H1 (cell line): ENCODE measurements at regions of chr17 and their contacts with region 1.

Region 1: DNA sequence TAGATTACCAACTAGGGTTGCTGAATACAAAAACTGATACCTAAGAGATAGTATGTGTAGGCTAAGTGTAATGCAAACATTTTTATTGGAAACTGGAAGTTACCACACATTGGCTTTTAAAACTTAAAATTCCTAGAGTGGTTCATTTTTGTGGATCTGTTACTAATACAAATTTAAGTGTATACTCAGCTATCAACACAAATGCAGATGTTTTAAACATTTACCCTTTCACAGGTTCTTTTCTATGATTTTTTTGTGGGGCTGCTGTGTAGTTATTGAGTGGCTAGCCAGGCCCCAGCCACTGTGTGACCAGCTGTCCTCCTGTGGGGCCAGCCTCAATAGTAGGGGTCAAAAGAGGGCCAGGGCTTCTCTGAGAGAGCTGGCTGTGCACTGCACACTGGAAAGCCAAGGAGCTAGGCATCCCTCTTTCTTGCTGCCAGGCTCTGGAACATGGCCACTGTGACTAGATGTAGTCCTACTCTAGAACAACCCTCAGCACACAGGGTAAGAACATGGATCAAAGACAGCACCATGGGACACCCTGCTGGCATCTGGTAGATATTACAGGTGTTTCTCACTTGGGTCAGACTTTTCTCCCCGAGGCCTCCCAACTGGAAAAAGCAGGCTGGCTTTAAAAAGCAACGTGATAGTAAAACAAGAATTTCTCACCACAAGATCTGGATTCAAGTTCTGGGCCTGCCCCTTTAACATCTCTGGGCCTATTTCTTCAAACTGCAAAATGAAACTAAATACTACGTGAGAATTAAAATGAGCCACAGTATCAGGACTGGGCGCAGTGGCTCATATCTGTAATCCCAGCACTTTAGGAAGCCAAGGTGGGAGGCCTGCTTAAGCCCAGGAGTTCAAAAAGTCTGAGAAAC is 7.3 kb upstream of the VEZF1 start:
- DNase-seq: no peak
- H3K4me3 ChIP-seq: no peak overlapping the region
- H3K27ac ChIP-seq: no peak overlapping the region
- H3K4me1 ChIP-seq: peaks cover 0 to 9% (median 0%) of the 10 kb centered on the region in 4 experiments; a peak in 1 of 7 replicates
- H3K27me3 ChIP-seq: no peaks in the 10 kb centered on the region
- CTCF ChIP-seq: peak; percentile 17 to 74 (median 67)
- EP300 ChIP-seq: no peak
- POLR2A ChIP-seq: peak; percentile 50 to 76
- RAD21 ChIP-seq: peak; percentile 79 to 84

Region 2: DNA sequence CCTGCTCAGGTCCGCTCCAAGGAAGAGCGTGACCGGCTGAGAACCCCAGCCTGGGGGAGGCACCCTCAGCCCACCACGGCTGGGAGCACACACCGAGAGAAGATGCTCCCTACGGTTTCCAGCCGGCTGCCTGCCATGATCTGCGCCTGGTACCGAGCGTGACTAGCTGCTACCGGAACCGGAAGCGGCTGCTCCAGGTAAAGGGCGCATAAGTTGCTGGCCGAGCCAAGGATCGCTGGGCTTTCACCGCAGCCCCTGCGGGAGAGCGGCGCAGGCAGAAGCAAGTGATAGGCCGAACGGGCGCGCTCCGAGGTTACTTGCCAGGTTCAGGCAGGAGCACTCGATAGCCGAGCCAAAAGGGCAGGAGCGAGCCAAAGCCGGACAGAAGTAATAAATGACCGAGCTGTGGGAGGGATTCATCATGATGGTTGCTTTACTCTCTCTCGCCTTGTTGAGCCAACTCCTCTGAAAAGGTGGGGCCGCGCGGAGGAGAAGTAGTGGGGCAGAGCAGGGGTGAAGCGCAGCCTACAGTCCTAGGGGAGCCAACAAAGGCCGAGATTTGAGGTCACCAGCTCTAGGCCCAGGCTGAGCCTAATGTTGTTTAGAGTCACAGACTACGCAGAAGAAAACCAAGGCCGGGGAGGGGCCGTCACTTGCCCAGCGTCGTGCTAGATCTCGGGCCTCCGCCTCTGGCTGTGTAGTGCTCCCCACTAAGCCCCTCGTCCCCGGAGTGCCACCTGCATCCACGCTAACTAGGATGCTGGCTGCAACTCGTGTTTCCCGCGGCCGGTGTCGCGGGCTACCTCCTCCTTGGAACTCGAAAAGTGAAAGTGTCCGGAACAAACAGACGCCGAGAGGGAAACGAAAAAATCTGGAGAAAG is 145.2 kb before region 1 on chr17 and contains the start of gene MRPS23:
- CTCF ChIA-PET with region 1: interaction called, 384 read pairs
- POLR2A ChIA-PET with region 1: interaction called, 672 read pairs
- DNase-seq: peak; percentile 90 to 96
- H3K4me3 ChIP-seq: peak within 1 kb of the TSS; percentile 89 to 98 (median 94)
- H3K27ac ChIP-seq: peak within 1 kb of the TSS; percentile 63
- H3K4me1 ChIP-seq: peaks cover 0 to 7% (median 3%) of the 10 kb centered on the region in 4 experiments; a peak in 3 of 7 replicates
- H3K27me3 ChIP-seq: no peaks in the 10 kb centered on the region
- CTCF ChIP-seq: no peak
- EP300 ChIP-seq: peak in 1 of 2 experiments; percentile 92; a peak in 1 of 3 replicates
- POLR2A ChIP-seq: peak in 1 of 2 experiments; percentile 68; a peak in 2 of 3 replicates
- RAD21 ChIP-seq: no peak
- total RNA-seq, gene MRPS23: 60.4 and 73.4 TPM in 2 replicates

Region 3: GRCh38 chr17:57892146-57892828 is 103.0 kb before region 1 on chr17:
- CTCF ChIA-PET with region 1: interaction called, 41 read pairs
- POLR2A ChIA-PET with region 1: interaction called, 7 read pairs
- DNase-seq: peak in 1 of 2 experiments; percentile 99
- H3K4me3 ChIP-seq: peak overlapping the region in 1 of 4 experiments; percentile 1; a peak in 1 of 8 replicates
- H3K27ac ChIP-seq: peak overlapping the region; percentile 54; the same call in 1 of the 2 replicates
- H3K4me1 ChIP-seq: peaks cover 8 to 11% (median 11%) of the 10 kb centered on the region in 4 experiments
- H3K27me3 ChIP-seq: no peaks in the 10 kb centered on the region
- CTCF ChIP-seq: peak; percentile 96 to 100 (median 100)
- EP300 ChIP-seq: peak in 1 of 2 experiments; percentile 71; a peak in 1 of 3 replicates
- POLR2A ChIP-seq: no peak
- RAD21 ChIP-seq: peak; percentile 89 to 94

Region 4: DNA sequence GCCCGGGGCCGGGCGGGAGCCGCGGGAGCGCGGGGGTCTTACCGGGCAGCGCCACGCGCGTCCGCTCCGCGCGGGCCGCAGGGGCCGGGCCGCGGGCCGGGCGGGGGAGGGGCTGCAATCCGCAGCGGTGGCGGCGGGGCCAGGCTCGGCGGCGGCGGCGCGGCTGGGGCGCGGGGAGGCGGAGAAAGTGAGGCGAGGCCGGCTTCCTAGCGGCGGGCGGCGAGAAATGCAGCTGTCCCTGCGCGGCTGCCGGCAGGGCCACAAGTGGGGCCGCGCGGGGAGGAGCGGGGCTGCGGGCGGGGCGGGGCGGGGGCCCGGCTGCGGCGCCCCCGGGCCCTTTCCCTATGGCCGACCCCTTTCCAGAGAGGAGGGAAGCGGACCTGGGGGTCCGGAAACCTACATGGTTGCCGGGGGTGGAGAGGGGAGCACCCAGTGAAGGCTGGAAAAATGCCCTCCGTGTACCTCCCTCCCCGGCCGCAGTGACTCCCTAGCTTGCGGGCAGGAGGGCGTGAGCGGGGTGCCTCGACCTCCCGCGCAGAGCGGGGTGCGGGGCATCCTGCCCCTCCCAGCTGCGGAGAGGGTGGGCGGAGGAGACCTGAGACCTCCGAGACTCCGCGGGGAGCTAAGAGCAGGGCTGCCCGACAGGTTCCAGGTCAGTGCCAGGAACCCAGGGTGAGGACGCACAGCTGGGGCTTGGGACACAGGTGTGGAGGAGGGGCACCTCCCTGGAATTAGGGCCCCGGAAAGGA is 40.0 kb before region 1 on chr17 and contains the start of gene CUEDC1:
- CTCF ChIA-PET with region 1: interaction called, 10 read pairs
- POLR2A ChIA-PET with region 1: interaction called, 9 read pairs
- DNase-seq: peak in 1 of 2 experiments; percentile 82
- H3K4me3 ChIP-seq: peak within 1 kb of the TSS; percentile 32 to 86 (median 66)
- H3K27ac ChIP-seq: no peak within 1 kb of the TSS
- H3K4me1 ChIP-seq: peaks cover 12 to 23% (median 14%) of the 10 kb centered on the region in 4 experiments
- H3K27me3 ChIP-seq: peaks cover 0 to 30% (median 20%) of the 10 kb centered on the region in 4 experiments; a peak in 6 of 7 replicates
- CTCF ChIP-seq: peak; percentile 16 to 63 (median 37)
- EP300 ChIP-seq: no peak
- POLR2A ChIP-seq: no peak
- RAD21 ChIP-seq: peak in 1 of 2 experiments; percentile 23; a peak in 2 of 4 replicates
- total RNA-seq, gene CUEDC1: 7.8 and 10.7 TPM in 2 replicates

Region 5: DNA sequence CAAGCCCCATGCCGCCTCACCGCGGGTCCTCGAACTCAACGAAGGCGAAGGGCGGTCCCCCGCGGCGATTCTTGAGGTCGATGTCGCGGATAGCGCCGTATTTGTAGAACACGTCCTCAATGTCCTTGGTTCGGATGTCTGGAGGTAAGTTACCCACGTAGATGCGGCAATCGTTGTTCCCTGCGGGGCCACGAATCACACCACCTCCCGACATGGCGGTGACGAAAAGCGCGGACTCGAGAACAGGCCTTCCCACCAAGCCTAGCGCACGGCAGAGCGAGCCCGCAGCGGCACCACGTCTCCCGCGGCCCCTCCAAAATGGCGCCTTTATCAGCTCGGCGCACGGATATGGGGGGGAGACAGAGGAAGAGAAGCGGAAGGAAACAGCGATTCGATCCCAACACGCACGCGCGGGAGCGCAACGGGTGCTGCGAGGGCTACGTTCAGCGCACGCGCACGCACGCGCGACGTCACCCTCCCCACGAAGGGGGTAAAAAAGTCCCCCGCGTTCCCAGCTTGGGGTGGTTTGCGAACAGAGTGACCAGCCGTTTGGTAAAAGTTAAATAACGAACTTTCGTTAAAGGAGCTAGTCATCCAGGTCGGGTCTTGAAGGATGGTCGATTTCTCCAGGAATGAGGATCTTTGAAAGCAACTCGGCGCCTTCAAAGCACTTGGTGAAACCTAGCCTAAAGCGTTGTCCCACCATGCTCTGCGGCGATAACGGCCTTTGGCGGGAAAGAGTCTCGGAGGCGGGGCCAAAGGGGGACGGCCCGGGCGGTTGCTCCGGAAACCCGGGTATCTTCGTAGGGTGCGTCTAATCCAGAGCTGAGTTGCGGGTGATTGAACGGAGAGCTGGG is 11.8 kb after region 1 on chr17 and contains the start of gene SRSF1:
- CTCF ChIA-PET with region 1: interaction called, 8 read pairs
- POLR2A ChIA-PET with region 1: interaction called, 246 read pairs
- DNase-seq: peak; percentile 87 to 95
- H3K4me3 ChIP-seq: peak within 1 kb of the TSS; percentile 87 to 98 (median 94)
- H3K27ac ChIP-seq: peak within 1 kb of the TSS; percentile 100
- H3K4me1 ChIP-seq: peaks cover 0 to 11% (median 5%) of the 10 kb centered on the region in 4 experiments; a peak in 4 of 7 replicates
- H3K27me3 ChIP-seq: no peaks in the 10 kb centered on the region
- CTCF ChIP-seq: no peak
- EP300 ChIP-seq: peak; percentile 20 to 38; a peak in 1 of 3 replicates
- POLR2A ChIP-seq: peak; percentile 85 to 92
- RAD21 ChIP-seq: no peak; a peak in 1 of 4 replicates
- total RNA-seq, gene SRSF1: 429 and 433 TPM in 2 replicates

Region 6: GRCh38 chr17:58089115-58089514 is 93.8 kb after region 1 on chr17:
- CTCF ChIA-PET with region 1: interaction called, 23 read pairs
- POLR2A ChIA-PET with region 1: interaction called, 292 read pairs
- DNase-seq: peak in 1 of 2 experiments; percentile 23
- H3K4me3 ChIP-seq: no peak overlapping the region
- H3K27ac ChIP-seq: no peak overlapping the region
- H3K4me1 ChIP-seq: peaks cover 0 to 8% (median 5%) of the 10 kb centered on the region in 4 experiments; a peak in 6 of 7 replicates
- H3K27me3 ChIP-seq: no peaks in the 10 kb centered on the region
- CTCF ChIP-seq: no peak
- EP300 ChIP-seq: no peak
- POLR2A ChIP-seq: no peak
- RAD21 ChIP-seq: no peak

Region 7: DNA sequence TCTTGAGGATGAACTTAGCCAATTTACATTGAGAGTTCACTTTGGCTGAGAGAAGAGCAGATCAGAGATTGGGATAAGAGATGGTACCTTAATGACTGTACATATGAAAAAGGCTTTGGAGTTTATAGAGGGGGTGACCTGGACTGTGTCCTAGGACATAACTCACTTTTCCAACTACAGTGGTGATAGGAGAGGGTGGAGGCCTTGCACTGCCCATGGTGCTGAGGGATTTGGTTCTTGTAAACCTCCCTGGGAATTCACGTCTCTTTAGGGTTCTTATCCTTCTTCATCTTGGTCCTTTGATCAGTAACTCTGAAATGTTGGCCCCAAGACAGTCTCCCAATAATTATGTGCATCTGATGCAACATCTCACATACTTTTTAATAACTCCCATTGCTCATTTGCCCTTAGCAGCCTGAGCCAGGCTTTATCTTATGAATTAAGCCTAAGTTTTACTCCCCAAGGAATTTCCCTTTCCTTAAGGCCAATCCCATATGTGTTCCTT is 152.7 kb after region 1 on chr17 and contains the start of gene OR4D1:
- CTCF ChIA-PET with region 1: no interaction called
- POLR2A ChIA-PET with region 1: no interaction called
- DNase-seq: no peak
- H3K4me3 ChIP-seq: no peak within 1 kb of the TSS
- H3K27ac ChIP-seq: no peak within 1 kb of the TSS
- H3K4me1 ChIP-seq: no peaks in the 10 kb centered on the region; a peak in 1 of 7 replicates
- H3K27me3 ChIP-seq: no peaks in the 10 kb centered on the region; a peak in 1 of 7 replicates
- CTCF ChIP-seq: no peak
- EP300 ChIP-seq: no peak
- POLR2A ChIP-seq: no peak
- RAD21 ChIP-seq: no peak
- total RNA-seq, gene OR4D1: 0.32 and 0.33 TPM in 2 replicates